ENCODE measurements at regions of chr2 and their contacts with region 1.

Region 1: GRCh38 chr2:189477756-189478155 is 36.5 kb downstream of the WDR75 start:
- DNase-seq: no peak
- ATAC-seq: no peak
- H3K4me3 ChIP-seq: no peak overlapping the region
- H3K27ac ChIP-seq: no peak overlapping the region
- H3K4me1 ChIP-seq: no peaks in the 10 kb centered on the region
- H3K27me3 ChIP-seq: no peaks in the 10 kb centered on the region
- CTCF ChIP-seq: no peak

Region 2: DNA sequence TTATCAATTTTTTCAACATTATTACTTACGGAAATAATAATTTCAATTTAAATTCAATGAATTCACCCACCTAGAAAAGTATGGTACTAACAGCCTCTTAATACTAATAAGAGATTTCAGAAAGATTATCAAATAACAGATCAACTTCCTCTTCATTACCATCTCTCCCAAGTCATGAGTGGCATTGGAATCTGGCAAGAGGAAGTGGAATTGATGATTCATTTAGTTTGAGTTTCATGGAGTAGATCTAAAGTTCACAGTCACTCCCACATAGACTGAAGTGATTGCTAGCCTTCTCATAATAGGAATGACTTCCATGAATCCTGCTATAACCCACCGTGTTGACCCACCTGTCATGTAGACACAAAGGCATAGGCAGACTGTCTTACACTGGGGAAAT is 114.2 kb before region 1 on chr2:
- intact Hi-C with region 1: no loop called
- DNase-seq: no peak
- ATAC-seq: no peak
- H3K4me3 ChIP-seq: no peak overlapping the region
- H3K27ac ChIP-seq: no peak overlapping the region
- H3K4me1 ChIP-seq: peaks cover 0 to 7% (median 0%) of the 10 kb centered on the region in 9 donors
- H3K27me3 ChIP-seq: no peaks in the 10 kb centered on the region
- CTCF ChIP-seq: no peak

Region 3: GRCh38 chr2:189393440-189394111 is 84.2 kb before region 1 on chr2:
- intact Hi-C with region 1: no loop called
- DNase-seq: no peak
- ATAC-seq: peak in 4 of 8 donors; percentile 26 to 76 (median 60)
- H3K4me3 ChIP-seq: no peak overlapping the region
- H3K27ac ChIP-seq: peak overlapping the region in 6 of 10 donors; percentile 1 to 62 (median 29)
- H3K4me1 ChIP-seq: no peaks in the 10 kb centered on the region
- H3K27me3 ChIP-seq: no peaks in the 10 kb centered on the region
- CTCF ChIP-seq: no peak

Region 4: DNA sequence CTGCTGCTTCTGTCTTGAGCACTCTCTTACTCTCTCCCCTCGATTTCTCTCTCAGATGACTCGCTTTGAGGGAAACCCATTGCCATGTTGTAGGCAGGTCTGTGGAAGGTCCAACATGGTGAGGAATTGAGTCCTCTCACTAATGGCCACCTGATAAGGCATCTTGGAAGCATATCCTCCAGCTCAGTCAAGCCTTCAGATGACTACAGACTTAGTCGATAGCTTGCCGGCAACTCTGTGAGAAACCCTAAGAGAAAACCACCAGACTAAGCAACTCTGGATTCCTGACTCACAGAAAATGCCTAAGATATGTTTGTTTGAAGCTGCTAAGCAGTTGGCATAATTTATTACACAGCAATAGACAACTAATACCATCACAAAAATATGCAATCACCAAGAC is 14.7 kb after region 1 on chr2:
- intact Hi-C with region 1: no loop called
- DNase-seq: no peak
- ATAC-seq: no peak
- H3K4me3 ChIP-seq: no peak overlapping the region
- H3K27ac ChIP-seq: no peak overlapping the region
- H3K4me1 ChIP-seq: no peaks in the 10 kb centered on the region
- H3K27me3 ChIP-seq: no peaks in the 10 kb centered on the region
- CTCF ChIP-seq: no peak

Region 5: GRCh38 chr2:189574793-189575475 is 97.2 kb after region 1 on chr2:
- intact Hi-C with region 1: loop called in 1 of 10 experiments (anchors 2 kb)
- DNase-seq: no peak
- ATAC-seq: peak in 6 of 8 donors; percentile 21 to 51 (median 32)
- H3K4me3 ChIP-seq: peak overlapping the region in 5 of 10 donors; percentile 22 to 86 (median 71)
- H3K27ac ChIP-seq: peak overlapping the region in 9 of 10 donors; percentile 11 to 75 (median 55)
- H3K4me1 ChIP-seq: peaks cover 7 to 97% (median 69%) of the 10 kb centered on the region in 9 donors
- H3K27me3 ChIP-seq: no peaks in the 10 kb centered on the region
- CTCF ChIP-seq: no peak

Measured in heart right ventricle (tissue), 16 donors.